ENCODE measurements at regions of chr9 and their contacts with region 1.

Region 1: DNA sequence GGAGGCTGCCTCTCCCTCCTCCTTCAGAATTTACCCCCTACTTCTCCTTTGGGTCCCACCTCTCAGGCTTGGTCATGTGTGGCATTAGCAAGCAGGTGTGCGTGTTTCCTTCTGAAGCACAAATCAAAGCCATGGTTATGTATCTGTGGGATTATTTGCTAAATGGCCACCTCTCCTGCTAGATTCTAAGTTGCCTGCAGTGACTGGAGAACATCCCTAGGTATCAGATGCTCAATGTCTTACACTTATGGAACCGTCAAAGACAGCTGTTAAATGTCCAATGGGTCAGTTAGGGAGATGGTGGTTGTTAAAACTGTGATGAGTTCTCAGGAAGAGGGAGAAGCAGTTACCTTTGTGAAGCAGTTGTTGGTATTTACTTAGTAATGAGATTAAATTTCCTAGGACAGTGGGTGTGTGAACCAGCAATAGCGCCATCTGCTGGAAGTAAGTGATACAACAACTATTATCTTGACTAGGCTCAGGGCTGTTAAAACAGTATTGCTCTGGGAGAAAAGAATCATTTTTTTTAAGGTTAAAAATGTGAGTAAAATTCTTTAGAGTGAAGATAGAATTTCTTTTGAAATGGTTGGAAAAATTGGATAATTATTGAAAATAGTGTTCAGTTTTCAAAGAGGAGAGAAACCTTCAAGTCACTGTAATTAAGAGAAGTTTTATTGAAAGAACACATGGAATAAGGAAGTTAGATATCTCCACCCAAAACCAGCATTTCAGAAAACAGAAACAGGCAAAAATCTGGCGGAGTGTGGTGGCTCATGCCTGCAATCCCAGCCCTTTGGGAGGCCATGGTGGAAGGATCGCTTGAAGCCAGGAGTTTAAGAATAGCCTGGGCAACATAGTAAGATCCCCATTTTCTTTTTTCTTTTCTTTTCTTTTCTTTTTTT is 71.3 kb downstream of the TMC1 start:
- DNase-seq: peak; percentile 46
- H3K4me3 ChIP-seq: no peak overlapping the region
- H3K27ac ChIP-seq: no peak overlapping the region
- H3K4me1 ChIP-seq: no peaks in the 10 kb centered on the region
- H3K27me3 ChIP-seq: no peaks in the 10 kb centered on the region
- CTCF ChIP-seq: peak; percentile 66 to 72

Region 2: GRCh38 chr9:72292256-72292682 is 300.5 kb before region 1 on chr9:
- CTCF ChIA-PET with region 1: interaction called, 3 read pairs
- dilution Hi-C with region 1: no loop called
- in situ Hi-C with region 1: no loop called
- intact Hi-C with region 1: loop called (anchors 1 kb)
- DNase-seq: peak; percentile 27
- H3K4me3 ChIP-seq: no peak overlapping the region
- H3K27ac ChIP-seq: no peak overlapping the region
- H3K4me1 ChIP-seq: peaks cover 8% of the 10 kb centered on the region
- H3K27me3 ChIP-seq: no peaks in the 10 kb centered on the region
- CTCF ChIP-seq: peak; percentile 45 to 48

Region 3: GRCh38 chr9:72351538-72352453 is 241.0 kb before region 1 on chr9:
- CTCF ChIA-PET with region 1: interaction called, 15 read pairs
- dilution Hi-C with region 1: no loop called
- in situ Hi-C with region 1: no loop called
- intact Hi-C with region 1: no loop called
- DNase-seq: peak; percentile 80
- H3K4me3 ChIP-seq: no peak overlapping the region
- H3K27ac ChIP-seq: no peak overlapping the region
- H3K4me1 ChIP-seq: peaks cover 4% of the 10 kb centered on the region
- H3K27me3 ChIP-seq: no peaks in the 10 kb centered on the region
- CTCF ChIP-seq: no peak

Measured in mammary epithelial cell (primary cell).